Activated B cell treated with CpG ODN at 0.5 μM for 24 hours (primary cell): ENCODE measurements at regions of chr2 and their contacts with region 1.

Region 1: DNA sequence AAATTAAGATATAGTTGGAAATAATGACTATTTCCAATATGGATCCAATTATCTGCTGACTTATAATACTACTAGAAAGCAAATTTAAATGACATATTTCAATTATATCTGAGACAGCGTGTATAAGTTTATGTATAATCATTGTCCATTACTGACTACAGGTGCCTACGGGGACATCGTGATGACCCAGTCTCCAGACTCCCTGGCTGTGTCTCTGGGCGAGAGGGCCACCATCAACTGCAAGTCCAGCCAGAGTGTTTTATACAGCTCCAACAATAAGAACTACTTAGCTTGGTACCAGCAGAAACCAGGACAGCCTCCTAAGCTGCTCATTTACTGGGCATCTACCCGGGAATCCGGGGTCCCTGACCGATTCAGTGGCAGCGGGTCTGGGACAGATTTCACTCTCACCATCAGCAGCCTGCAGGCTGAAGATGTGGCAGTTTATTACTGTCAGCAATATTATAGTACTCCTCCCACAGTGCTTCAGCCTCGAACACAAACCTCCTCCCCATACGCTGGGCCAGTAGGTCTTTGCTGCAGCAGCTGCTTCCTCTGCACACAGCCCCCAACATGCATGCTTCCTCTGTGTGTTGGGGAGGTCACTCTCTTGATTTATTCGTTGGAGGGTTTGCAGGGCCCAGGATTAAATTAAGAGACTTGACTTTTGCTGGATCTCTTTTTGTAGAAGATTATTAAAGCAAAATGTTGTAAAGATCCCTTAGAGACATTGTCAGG is 194.4 kb downstream of the RPIA start:
- DNase-seq: no peak
- ATAC-seq: peak; percentile 40
- H3K4me3 Mint-ChIP-seq: peak overlapping the region; percentile 74
- H3K27ac Mint-ChIP-seq: peak overlapping the region; percentile 79
- H3K4me1 Mint-ChIP-seq: peaks cover 60% of the 10 kb centered on the region
- H3K27me3 Mint-ChIP-seq: no peaks in the 10 kb centered on the region
- CTCF ChIP-seq: no peak

Region 2: GRCh38 chr2:88283886-88284592 is 601.8 kb before region 1 on chr2:
- CTCF ChIA-PET with region 1: no interaction called
- POLR2A ChIA-PET with region 1: no interaction called
- intact Hi-C with region 1: no loop called
- DNase-seq: no peak
- ATAC-seq: no peak
- H3K4me3 Mint-ChIP-seq: no peak overlapping the region
- H3K27ac Mint-ChIP-seq: no peak overlapping the region
- H3K4me1 Mint-ChIP-seq: no peaks in the 10 kb centered on the region
- H3K27me3 Mint-ChIP-seq: peaks cover 22% of the 10 kb centered on the region
- CTCF ChIP-seq: no peak

Region 3: GRCh38 chr2:88897715-88898114 is 11.9 kb after region 1 on chr2:
- CTCF ChIA-PET with region 1: interaction called, 29 read pairs
- POLR2A ChIA-PET with region 1: interaction called, 17 read pairs
- intact Hi-C with region 1: loop called (anchors 1 kb)
- DNase-seq: no peak
- ATAC-seq: peak; percentile 71
- H3K4me3 Mint-ChIP-seq: peak overlapping the region; percentile 32
- H3K27ac Mint-ChIP-seq: peak overlapping the region; percentile 63
- H3K4me1 Mint-ChIP-seq: peaks cover 18% of the 10 kb centered on the region
- H3K27me3 Mint-ChIP-seq: no peaks in the 10 kb centered on the region
- CTCF ChIP-seq: no peak